Activated CD8-positive, alpha-beta T cell treated with anti-CD3 and anti-CD28 coated beads, Interleukin-2, amount 10 ng/mL, durations not matched to agents 7 days and 5 days (primary cell): ENCODE measurements at regions of chr15 and their contacts with region 1.

Region 1: DNA sequence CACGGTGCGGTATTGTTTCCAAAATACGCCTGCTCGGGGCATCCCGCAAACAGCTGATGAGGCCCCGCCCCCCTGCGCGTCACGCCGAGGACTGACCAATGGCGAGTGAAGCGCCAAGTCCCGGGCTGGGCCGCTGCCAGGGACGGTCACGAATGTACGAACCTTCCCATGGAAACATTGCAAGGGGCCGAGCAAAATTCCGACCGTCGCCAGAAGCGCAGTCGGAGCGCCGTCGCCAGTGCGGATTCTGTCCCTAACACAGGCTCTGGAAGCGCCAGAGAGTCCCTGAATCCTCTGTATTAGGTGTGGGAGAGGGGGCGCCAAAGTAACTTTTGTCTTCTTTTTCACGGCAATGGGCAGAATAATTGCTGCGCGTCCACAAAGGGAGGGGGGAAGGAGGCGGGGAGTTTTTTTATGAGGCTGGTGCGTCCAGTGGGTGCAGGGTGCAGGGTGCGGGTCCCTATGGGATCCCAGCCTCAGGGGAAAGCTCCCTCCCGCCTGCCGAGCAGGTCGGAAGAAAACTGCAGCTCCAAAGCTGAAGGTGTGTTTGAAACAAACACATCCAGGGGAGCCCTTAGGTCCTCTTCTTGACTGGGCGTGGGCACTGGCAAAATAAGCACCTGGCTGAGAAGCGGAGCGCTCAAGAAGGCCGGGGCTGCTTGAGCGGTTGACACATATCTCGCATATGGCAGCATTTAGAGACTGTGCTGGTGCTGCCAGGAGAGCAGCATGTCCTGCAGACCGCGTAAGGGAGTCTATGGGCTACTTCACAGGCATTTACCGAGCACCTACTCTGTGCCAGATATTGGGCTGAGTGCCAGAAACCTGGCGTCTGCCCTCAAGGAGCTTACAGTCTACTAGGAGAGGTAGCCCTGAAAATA is at the start of gene BMF:
- DNase-seq: peak; percentile 97
- ATAC-seq: peak; percentile 88
- H3K4me3 Mint-ChIP-seq: peak within 1 kb of the TSS; percentile 89
- H3K27ac Mint-ChIP-seq: peak within 1 kb of the TSS; percentile 78
- H3K4me1 Mint-ChIP-seq: peaks cover 58% of the 10 kb centered on the region
- H3K27me3 Mint-ChIP-seq: peaks cover 14% of the 10 kb centered on the region
- total RNA-seq, gene BMF: 2.2 to 4.0 TPM

Region 2: GRCh38 chr15:40038638-40039543 is 70.2 kb before region 1 on chr15 and contains the start of gene SRP14:
- CTCF ChIA-PET with region 1: interaction called, 366 read pairs
- POLR2A ChIA-PET with region 1: interaction called, 4 read pairs
- DNase-seq: peak; percentile 95
- ATAC-seq: peak; percentile 95
- H3K4me3 Mint-ChIP-seq: peak within 1 kb of the TSS; percentile 97
- H3K27ac Mint-ChIP-seq: peak within 1 kb of the TSS; percentile 95
- H3K4me1 Mint-ChIP-seq: peaks cover 50% of the 10 kb centered on the region
- H3K27me3 Mint-ChIP-seq: no peaks in the 10 kb centered on the region
- total RNA-seq, gene SRP14: 178 to 182 TPM

Region 3: DNA sequence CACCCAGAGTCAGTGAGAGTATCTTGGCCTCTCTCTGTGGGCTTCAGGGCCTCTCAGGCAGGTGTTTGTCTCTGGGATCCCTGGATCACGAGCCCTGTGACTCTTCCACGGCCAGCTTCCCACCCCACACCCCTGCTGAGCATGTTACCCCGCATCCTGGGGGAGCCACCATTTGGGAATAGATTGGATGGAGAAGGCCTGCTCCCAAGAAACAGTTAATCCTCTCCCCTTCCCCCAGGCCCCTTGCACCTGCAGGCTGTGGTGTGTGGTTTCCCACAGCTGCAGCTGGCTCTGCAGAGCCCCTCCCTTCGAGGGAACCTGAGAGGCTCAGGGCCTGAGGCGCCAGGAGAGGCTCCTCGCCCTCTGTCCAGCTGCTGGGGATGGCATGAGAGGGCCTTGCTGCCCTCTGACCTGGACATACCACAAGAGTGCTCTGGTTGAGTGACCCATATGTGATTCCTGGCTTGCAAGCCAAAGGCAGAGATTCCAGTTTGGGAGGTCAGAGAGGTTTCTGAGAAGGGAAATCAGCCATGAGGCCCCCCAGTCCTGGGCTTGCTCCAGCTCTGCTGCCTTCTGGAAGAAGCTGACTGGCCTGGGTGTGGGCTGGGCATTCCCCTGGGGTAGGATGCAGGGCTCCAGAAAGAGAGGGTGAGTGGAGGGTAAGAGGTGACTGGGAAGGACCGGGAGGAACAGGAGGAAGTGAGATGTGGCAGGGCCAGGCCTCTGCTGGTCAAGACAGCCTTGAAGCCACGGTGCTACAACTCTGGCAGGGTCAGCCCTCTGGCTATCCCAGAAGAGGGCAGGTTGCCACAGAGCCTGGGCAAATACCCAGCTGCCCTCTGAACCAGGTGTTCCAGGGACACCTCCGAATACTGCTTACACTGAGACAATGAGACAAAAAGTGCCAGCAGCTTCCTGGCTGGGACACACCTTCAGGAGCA is 54.2 kb before region 1 on chr15:
- CTCF ChIA-PET with region 1: interaction called, 366 read pairs
- POLR2A ChIA-PET with region 1: interaction called, 5 read pairs
- DNase-seq: peak; percentile 61
- ATAC-seq: peak; percentile 66
- H3K4me3 Mint-ChIP-seq: peak overlapping the region; percentile 32
- H3K27ac Mint-ChIP-seq: peak overlapping the region; percentile 79
- H3K4me1 Mint-ChIP-seq: peaks cover 78% of the 10 kb centered on the region
- H3K27me3 Mint-ChIP-seq: no peaks in the 10 kb centered on the region

Region 4: GRCh38 chr15:40069178-40070165 is 39.6 kb before region 1 on chr15:
- CTCF ChIA-PET with region 1: interaction called, 13 read pairs
- POLR2A ChIA-PET with region 1: interaction called, 6 read pairs
- DNase-seq: no peak
- ATAC-seq: no peak
- H3K4me3 Mint-ChIP-seq: no peak overlapping the region
- H3K27ac Mint-ChIP-seq: no peak overlapping the region
- H3K4me1 Mint-ChIP-seq: peaks cover 26% of the 10 kb centered on the region
- H3K27me3 Mint-ChIP-seq: no peaks in the 10 kb centered on the region

Region 5: GRCh38 chr15:40098489-40099261 is 10.4 kb before region 1 on chr15:
- CTCF ChIA-PET with region 1: interaction called, 387 read pairs
- POLR2A ChIA-PET with region 1: interaction called, 32 read pairs
- DNase-seq: peak; percentile 85
- ATAC-seq: peak; percentile 97
- H3K4me3 Mint-ChIP-seq: peak overlapping the region; percentile 57
- H3K27ac Mint-ChIP-seq: peak overlapping the region; percentile 92
- H3K4me1 Mint-ChIP-seq: peaks cover 90% of the 10 kb centered on the region
- H3K27me3 Mint-ChIP-seq: no peaks in the 10 kb centered on the region

Region 6: DNA sequence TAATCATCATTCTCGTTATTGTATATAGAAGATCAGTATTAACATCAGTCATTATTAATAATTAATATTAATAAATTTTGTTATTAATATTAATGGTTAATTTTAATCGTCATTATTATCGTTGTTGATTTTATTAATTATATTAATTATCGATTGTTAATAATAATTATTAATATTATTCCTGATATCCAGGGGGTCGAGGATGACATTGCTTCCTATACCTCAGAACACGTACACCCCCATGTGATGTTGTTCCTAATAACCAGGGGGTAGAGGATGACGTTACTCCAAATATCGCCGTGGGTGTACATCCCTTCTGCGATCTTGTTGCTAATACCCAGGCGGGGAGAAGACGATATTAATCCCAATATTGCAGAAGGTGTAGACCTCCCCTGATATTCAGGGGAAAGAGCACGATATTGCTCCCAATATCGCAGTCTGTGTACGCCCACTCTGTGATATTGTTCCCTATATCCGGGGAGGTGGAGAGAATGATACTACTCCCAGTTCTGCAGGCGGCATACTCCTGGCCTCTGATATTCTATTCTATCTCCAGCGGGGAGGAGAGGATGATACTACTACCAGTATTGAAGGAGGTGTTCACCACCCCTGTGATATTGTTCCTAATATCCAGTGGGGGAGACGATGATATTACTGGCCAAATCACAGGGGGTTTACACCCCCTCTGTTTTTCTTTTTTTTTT is 21.9 kb after region 1 on chr15:
- CTCF ChIA-PET with region 1: no interaction called
- POLR2A ChIA-PET with region 1: no interaction called
- DNase-seq: no peak
- ATAC-seq: no peak
- H3K4me3 Mint-ChIP-seq: no peak overlapping the region
- H3K27ac Mint-ChIP-seq: no peak overlapping the region
- H3K4me1 Mint-ChIP-seq: no peaks in the 10 kb centered on the region
- H3K27me3 Mint-ChIP-seq: no peaks in the 10 kb centered on the region

Region 7: GRCh38 chr15:40160689-40161688 is 51.9 kb after region 1 on chr15 and contains the start of gene BUB1B:
- CTCF ChIA-PET with region 1: interaction called, 26 read pairs
- POLR2A ChIA-PET with region 1: interaction called, 4 read pairs
- DNase-seq: peak; percentile 97
- ATAC-seq: peak; percentile 95
- H3K4me3 Mint-ChIP-seq: no peak within 1 kb of the TSS
- H3K27ac Mint-ChIP-seq: no peak within 1 kb of the TSS
- H3K4me1 Mint-ChIP-seq: peaks cover 10% of the 10 kb centered on the region
- H3K27me3 Mint-ChIP-seq: no peaks in the 10 kb centered on the region
- total RNA-seq, gene BUB1B: 91.9 to 94.9 TPM